Prostate gland (tissue), 2 donors: ENCODE measurements at regions of chr4 and their contacts with region 1.

Region 1: DNA sequence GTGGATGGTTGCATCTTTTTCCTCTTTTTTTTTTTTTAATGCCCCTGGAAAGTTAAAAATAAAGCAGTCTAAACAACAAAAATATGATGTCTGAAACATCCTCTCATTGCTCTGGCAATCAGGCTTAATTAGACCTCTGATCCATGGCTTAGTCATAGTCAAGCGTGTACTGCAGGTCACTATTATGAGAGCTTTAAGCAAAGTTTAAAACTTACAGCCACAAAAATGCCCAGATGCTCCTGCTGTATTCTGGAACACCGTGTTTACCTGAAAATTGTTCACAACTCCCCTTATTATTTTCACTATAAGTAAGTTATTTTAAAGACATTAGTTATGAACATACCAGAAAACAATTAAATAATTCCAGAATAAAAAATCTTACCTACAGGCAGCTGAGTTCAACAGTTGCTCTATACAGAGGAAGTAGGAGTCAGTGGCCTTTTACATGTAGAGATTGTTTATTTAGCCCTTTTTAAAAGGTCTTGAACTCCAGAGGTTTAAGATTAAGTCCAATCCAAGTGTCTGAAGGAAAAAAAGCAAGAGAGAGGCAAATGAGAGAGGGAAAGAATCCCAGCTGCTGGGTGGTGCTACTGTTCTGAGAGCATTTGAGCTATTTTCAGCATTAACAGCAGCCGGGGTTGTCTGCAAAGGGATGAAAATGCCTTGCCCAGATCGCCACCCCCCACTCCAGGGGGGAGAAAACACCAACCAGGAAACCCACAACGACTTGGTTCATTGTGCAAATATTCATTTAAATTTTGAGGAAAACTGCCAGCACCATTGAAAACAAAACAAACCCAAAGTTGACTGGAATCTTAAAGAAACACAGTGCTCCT is 36.9 kb downstream of the SORBS2 start:
- DNase-seq: no peak
- H3K4me3 ChIP-seq: no peak overlapping the region
- H3K27ac ChIP-seq: peak overlapping the region; percentile 40 to 41
- H3K4me1 ChIP-seq: no peaks in the 10 kb centered on the region
- H3K27me3 ChIP-seq: no peaks in the 10 kb centered on the region
- CTCF ChIP-seq: no peak
- POLR2A ChIP-seq: no peak

Region 2: GRCh38 chr4:185726931-185727330 is 48.1 kb before region 1 on chr4:
- intact Hi-C with region 1: no loop called
- DNase-seq: no peak
- H3K4me3 ChIP-seq: no peak overlapping the region
- H3K27ac ChIP-seq: peak overlapping the region in 1 of 2 donors; percentile 30
- H3K4me1 ChIP-seq: peaks cover 2% of the 10 kb centered on the region
- H3K27me3 ChIP-seq: no peaks in the 10 kb centered on the region
- CTCF ChIP-seq: no peak
- POLR2A ChIP-seq: no peak

Region 3: GRCh38 chr4:185738038-185738552 is 37.0 kb before region 1 on chr4:
- intact Hi-C with region 1: loop called (anchors 5 kb)
- DNase-seq: no peak
- H3K4me3 ChIP-seq: no peak overlapping the region
- H3K27ac ChIP-seq: peak overlapping the region; percentile 45 to 62
- H3K4me1 ChIP-seq: no peaks in the 10 kb centered on the region
- H3K27me3 ChIP-seq: no peaks in the 10 kb centered on the region
- CTCF ChIP-seq: no peak
- POLR2A ChIP-seq: no peak